Common myeloid progenitor, CD34-positive (primary cell): ENCODE measurements at regions of chr19 and their contacts with region 1.

Region 1: DNA sequence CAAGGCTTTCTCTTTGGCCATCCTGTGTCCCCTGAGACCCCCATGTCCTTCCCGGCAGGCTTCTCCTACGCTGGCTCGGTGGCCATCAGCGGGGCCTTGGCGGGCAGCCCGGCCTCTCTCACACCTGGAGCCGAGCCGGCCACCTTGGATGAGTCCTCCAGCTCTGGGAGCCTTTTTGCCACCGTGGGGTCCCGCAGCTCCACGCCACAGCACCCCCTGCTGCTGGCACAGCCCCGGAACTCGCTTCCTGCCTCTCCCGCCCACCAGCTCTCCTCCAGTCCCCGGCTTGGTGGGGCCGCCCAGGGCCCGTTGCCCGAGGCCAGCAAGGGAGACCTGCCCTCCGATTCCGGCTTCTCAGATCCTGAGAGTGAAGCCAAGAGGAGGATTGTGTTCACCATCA is 14.2 kb downstream of the PLEKHJ1 start:
- DNase-seq: peak in 1 of 3 donors; percentile 26
- H3K4me3 ChIP-seq: no peak overlapping the region
- H3K27ac ChIP-seq: no peak overlapping the region
- H3K4me1 ChIP-seq: no peaks in the 10 kb centered on the region
- H3K27me3 ChIP-seq: no peaks in the 10 kb centered on the region

Region 2: GRCh38 chr19:2158535-2158934 is 63.4 kb before region 1 on chr19:
- CTCF ChIA-PET with region 1: interaction called, 10 read pairs
- POLR2A ChIA-PET with region 1: interaction called, 3 read pairs
- DNase-seq: no peak
- H3K4me3 ChIP-seq: no peak overlapping the region
- H3K27ac ChIP-seq: no peak overlapping the region
- H3K4me1 ChIP-seq: peaks cover 0 to 4% (median under 1%) of the 10 kb centered on the region in 4 experiments
- H3K27me3 ChIP-seq: no peaks in the 10 kb centered on the region